BJ (cell line): ENCODE measurements at regions of chr1 and their contacts with region 1.

Region 1: GRCh38 chr1:8166406-8166975 is 140.4 kb upstream of the ERRFI1 start:
- DNase-seq: no peak
- H3K4me3 ChIP-seq: no peak overlapping the region
- H3K27me3 ChIP-seq: 0 out of 2 replicates have a peak, but pooled peaks cover 2% of the 10 kb centered on the region
- CTCF ChIP-seq: no peak

Region 2: GRCh38 chr1:8302081-8302956 is 135.8 kb after region 1 on chr1:
- CTCF ChIA-PET with region 1: no interaction called
- POLR2A ChIA-PET with region 1: no interaction called
- DNase-seq: no peak
- H3K4me3 ChIP-seq: no peak overlapping the region
- H3K27me3 ChIP-seq: no peaks in the 10 kb centered on the region; the same call in 1 of the 2 replicates
- CTCF ChIP-seq: no peak

Region 3: GRCh38 chr1:8416857-8417256 is 250.4 kb after region 1 on chr1:
- CTCF ChIA-PET with region 1: no interaction called
- POLR2A ChIA-PET with region 1: interaction called, 26 read pairs
- DNase-seq: no peak
- H3K4me3 ChIP-seq: no peak overlapping the region
- H3K27me3 ChIP-seq: no peaks in the 10 kb centered on the region
- CTCF ChIP-seq: no peak

Region 4: DNA sequence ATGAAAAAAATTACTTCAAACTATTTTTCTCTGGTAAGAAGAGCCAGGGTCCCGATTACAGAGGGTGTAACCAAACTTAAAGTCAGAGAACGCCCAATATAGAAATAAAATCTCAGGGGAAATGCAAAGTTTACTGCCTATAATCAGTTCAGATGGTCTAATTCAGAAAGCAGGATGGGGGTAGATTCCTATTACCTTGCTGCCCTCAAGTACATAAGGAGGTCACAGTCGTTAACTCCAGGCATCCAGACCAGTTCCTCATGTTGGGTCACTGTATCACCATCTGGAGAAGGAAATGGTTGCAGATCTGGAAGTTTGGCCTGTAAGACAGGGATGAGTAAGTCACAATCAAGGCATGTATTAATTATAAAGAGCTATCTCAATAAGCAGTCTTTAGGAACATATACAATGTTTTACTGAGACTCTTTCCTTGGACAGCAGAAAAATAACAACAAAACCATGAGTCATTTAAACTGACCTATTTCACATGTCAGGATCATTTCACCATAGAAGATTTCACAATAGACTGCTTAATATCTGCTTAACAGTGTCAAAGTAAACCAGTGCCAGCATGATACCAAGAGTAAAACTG is 330.8 kb after region 1 on chr1:
- CTCF ChIA-PET with region 1: no interaction called
- POLR2A ChIA-PET with region 1: no interaction called
- DNase-seq: peak; percentile 26
- H3K4me3 ChIP-seq: no peak overlapping the region
- H3K27me3 ChIP-seq: no peaks in the 10 kb centered on the region
- CTCF ChIP-seq: no peak